CD8-positive, alpha-beta T cell (primary cell): ENCODE measurements at regions of chr1 and their contacts with region 1.

Region 1: GRCh38 chr1:1122078-1122811 is 6.4 kb upstream of the C1orf159 start:
- DNase-seq: peak; percentile 68 to 92 (median 82)
- ATAC-seq: peak; percentile 98
- H3K4me3 ChIP-seq: peak overlapping the region; percentile 43 to 46
- H3K4me3 Mint-ChIP-seq: peak overlapping the region; percentile 37
- H3K27ac ChIP-seq: no peak overlapping the region
- H3K27ac Mint-ChIP-seq: no peak overlapping the region
- H3K4me1 ChIP-seq: peaks cover 12% of the 10 kb centered on the region
- H3K4me1 Mint-ChIP-seq: peaks cover 4% of the 10 kb centered on the region
- H3K27me3 ChIP-seq: peaks cover 0 to 3% of the 10 kb centered on the region in 2 experiments
- H3K27me3 Mint-ChIP-seq: peaks cover 4% of the 10 kb centered on the region
- CTCF ChIP-seq: peak; percentile 81

Region 2: DNA sequence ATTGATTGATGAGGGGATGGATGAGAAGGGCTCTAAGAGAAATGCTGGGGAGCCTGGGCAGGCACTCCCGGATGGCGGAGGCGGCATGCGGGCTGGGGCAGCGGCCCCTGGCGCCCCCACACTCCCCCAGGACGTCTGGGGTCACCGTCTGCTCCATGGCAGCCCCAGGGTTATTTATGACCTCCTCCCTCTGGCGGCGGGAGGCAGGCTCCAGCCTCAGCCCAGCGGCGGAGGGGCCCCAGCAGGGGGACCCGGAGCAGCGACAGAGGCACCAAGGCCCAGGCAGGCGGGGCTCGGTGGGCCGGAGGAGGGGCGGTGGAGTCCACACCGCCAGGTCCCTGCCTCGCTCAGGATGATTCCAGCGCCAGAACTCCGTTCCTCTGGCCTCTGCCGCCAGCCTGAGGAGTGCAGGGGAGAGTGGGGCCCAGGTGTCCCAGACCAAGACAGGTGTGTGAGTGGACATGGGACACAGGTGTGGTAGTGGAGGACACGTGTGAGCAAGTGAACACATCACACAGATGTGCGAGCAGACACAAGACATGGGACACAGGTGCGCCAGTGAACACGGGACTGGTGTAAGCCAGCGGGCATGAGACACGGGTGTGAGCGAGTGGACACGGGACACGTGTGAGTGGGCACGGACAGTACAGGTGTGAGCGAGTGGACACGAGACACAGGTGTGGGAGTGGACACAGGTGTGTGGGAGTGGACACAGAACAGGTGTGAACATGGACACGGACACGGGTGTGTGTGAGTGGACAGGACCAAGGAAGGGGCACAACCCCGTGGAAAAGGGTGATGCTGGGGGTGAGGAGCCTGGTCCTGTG is 201.0 kb before region 1 on chr1:
- CTCF ChIA-PET with region 1: no interaction called
- POLR2A ChIA-PET with region 1: no interaction called
- intact Hi-C with region 1: no loop called
- DNase-seq: peak in 4 of 9 experiments; percentile 24 to 66 (median 55)
- ATAC-seq: peak; percentile 48
- H3K4me3 ChIP-seq: no peak overlapping the region
- H3K4me3 Mint-ChIP-seq: peak overlapping the region; percentile 29
- H3K27ac ChIP-seq: no peak overlapping the region
- H3K27ac Mint-ChIP-seq: no peak overlapping the region
- H3K4me1 ChIP-seq: peaks cover 33% of the 10 kb centered on the region
- H3K4me1 Mint-ChIP-seq: peaks cover 17% of the 10 kb centered on the region
- H3K27me3 ChIP-seq: peaks cover 39 to 42% of the 10 kb centered on the region in 2 experiments
- H3K27me3 Mint-ChIP-seq: peaks cover 40% of the 10 kb centered on the region
- CTCF ChIP-seq: no peak

Region 3: GRCh38 chr1:1033009-1033587 is 89.1 kb before region 1 on chr1:
- CTCF ChIA-PET with region 1: interaction called, 5 read pairs
- POLR2A ChIA-PET with region 1: no interaction called
- intact Hi-C with region 1: loop called (anchors 1 to 2 kb)
- DNase-seq: peak; percentile 72 to 93 (median 85)
- ATAC-seq: peak; percentile 94
- H3K4me3 ChIP-seq: peak overlapping the region; percentile 23 to 24
- H3K4me3 Mint-ChIP-seq: peak overlapping the region; percentile 74
- H3K27ac ChIP-seq: no peak overlapping the region
- H3K27ac Mint-ChIP-seq: no peak overlapping the region
- H3K4me1 ChIP-seq: peaks cover 13% of the 10 kb centered on the region
- H3K4me1 Mint-ChIP-seq: peaks cover 7% of the 10 kb centered on the region
- H3K27me3 ChIP-seq: peaks cover 0 to 27% of the 10 kb centered on the region in 2 experiments
- H3K27me3 Mint-ChIP-seq: peaks cover 20% of the 10 kb centered on the region
- CTCF ChIP-seq: peak; percentile 95

Region 4: DNA sequence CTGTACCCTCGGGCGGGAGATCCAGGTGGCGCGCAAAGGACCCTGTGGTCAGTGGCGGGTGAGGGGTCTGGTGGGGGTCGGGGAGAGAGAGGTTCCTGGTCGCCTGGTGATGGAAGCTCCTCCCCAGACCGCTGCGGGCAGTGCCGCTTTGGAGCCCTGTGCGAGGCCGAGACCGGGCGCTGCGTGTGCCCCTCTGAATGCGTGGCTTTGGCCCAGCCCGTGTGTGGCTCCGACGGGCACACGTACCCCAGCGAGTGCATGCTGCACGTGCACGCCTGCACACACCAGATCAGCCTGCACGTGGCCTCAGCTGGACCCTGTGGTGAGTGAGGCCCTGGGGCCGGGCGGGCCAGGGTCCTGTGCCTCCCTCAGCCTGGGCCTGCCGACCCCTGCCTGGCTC is 78.8 kb before region 1 on chr1:
- CTCF ChIA-PET with region 1: no interaction called
- POLR2A ChIA-PET with region 1: no interaction called
- intact Hi-C with region 1: no loop called
- DNase-seq: no peak
- ATAC-seq: no peak
- H3K4me3 ChIP-seq: no peak overlapping the region
- H3K4me3 Mint-ChIP-seq: no peak overlapping the region
- H3K27ac ChIP-seq: no peak overlapping the region
- H3K27ac Mint-ChIP-seq: no peak overlapping the region
- H3K4me1 ChIP-seq: peaks cover 21% of the 10 kb centered on the region
- H3K4me1 Mint-ChIP-seq: peaks cover 14% of the 10 kb centered on the region
- H3K27me3 ChIP-seq: peaks cover 0 to 4% of the 10 kb centered on the region in 2 experiments
- H3K27me3 Mint-ChIP-seq: peaks cover 4% of the 10 kb centered on the region
- CTCF ChIP-seq: no peak

Region 5: GRCh38 chr1:1055841-1056736 is 66.2 kb before region 1 on chr1:
- CTCF ChIA-PET with region 1: no interaction called
- POLR2A ChIA-PET with region 1: no interaction called
- intact Hi-C with region 1: no loop called
- DNase-seq: no peak
- ATAC-seq: no peak
- H3K4me3 ChIP-seq: no peak overlapping the region
- H3K4me3 Mint-ChIP-seq: no peak overlapping the region
- H3K27ac ChIP-seq: no peak overlapping the region
- H3K27ac Mint-ChIP-seq: no peak overlapping the region
- H3K4me1 ChIP-seq: peaks cover 14% of the 10 kb centered on the region
- H3K4me1 Mint-ChIP-seq: peaks cover 8% of the 10 kb centered on the region
- H3K27me3 ChIP-seq: peaks cover 0 to 26% of the 10 kb centered on the region in 2 experiments
- H3K27me3 Mint-ChIP-seq: peaks cover 15% of the 10 kb centered on the region
- CTCF ChIP-seq: no peak

Region 6: GRCh38 chr1:1173793-1174415 is 51.7 kb after region 1 on chr1 and contains the start of gene TTLL10:
- CTCF ChIA-PET with region 1: interaction called, 10 read pairs
- POLR2A ChIA-PET with region 1: no interaction called
- intact Hi-C with region 1: no loop called
- DNase-seq: peak; percentile 28 to 81 (median 66)
- ATAC-seq: peak; percentile 45
- H3K4me3 ChIP-seq: no peak within 1 kb of the TSS
- H3K4me3 Mint-ChIP-seq: peak within 1 kb of the TSS; percentile 32
- H3K27ac ChIP-seq: no peak within 1 kb of the TSS
- H3K27ac Mint-ChIP-seq: no peak within 1 kb of the TSS
- H3K4me1 ChIP-seq: peaks cover 41% of the 10 kb centered on the region
- H3K4me1 Mint-ChIP-seq: peaks cover 32% of the 10 kb centered on the region
- H3K27me3 ChIP-seq: peaks cover 0 to 14% of the 10 kb centered on the region in 2 experiments
- H3K27me3 Mint-ChIP-seq: peaks cover 5% of the 10 kb centered on the region
- CTCF ChIP-seq: no peak
- total RNA-seq, gene TTLL10: not detected

Region 7: DNA sequence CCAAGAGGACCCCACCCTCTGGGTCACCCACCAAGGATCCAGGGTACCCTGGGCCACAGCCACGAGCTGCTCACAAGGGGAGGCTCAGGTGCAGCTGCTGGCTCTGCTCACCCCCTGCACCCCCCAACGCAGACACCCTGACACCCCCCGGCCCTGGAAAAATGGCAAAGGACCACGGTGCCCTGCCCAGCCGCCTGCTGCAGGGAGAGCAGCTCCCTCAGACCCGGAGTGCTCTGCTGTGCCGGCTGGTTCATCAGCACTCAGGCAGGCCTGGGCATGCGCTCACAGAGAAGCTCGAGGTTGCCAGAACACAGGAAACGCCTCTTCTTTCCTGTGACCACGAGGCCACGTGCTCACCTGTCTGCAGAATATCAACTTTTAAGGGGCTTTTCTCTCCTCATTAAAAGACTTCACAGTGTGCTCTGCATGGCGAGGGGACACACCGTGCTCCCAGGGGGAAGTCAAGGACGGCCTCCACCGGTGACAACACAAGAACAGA is 128.6 kb after region 1 on chr1:
- CTCF ChIA-PET with region 1: interaction called, 20 read pairs
- POLR2A ChIA-PET with region 1: interaction called, 8 read pairs
- intact Hi-C with region 1: loop called in 1 of 2 experiments (anchors 1 kb)
- DNase-seq: peak; percentile 30 to 91 (median 74)
- ATAC-seq: peak; percentile 99
- H3K4me3 ChIP-seq: peak overlapping the region in 1 of 2 experiments; percentile 10
- H3K4me3 Mint-ChIP-seq: peak overlapping the region; percentile 72
- H3K27ac ChIP-seq: peak overlapping the region; percentile 40 to 63
- H3K27ac Mint-ChIP-seq: peak overlapping the region; percentile 93
- H3K4me1 ChIP-seq: peaks cover 25% of the 10 kb centered on the region
- H3K4me1 Mint-ChIP-seq: peaks cover 15% of the 10 kb centered on the region
- H3K27me3 ChIP-seq: peaks cover 0 to 6% of the 10 kb centered on the region in 2 experiments
- H3K27me3 Mint-ChIP-seq: no peaks in the 10 kb centered on the region
- CTCF ChIP-seq: no peak

Region 8: GRCh38 chr1:1273512-1274298 is 151.5 kb after region 1 on chr1 and contains the start of gene UBE2J2:
- CTCF ChIA-PET with region 1: interaction called, 16 read pairs
- POLR2A ChIA-PET with region 1: no interaction called
- intact Hi-C with region 1: no loop called
- DNase-seq: peak; percentile 86 to 96 (median 93)
- ATAC-seq: peak; percentile 95
- H3K4me3 ChIP-seq: peak within 1 kb of the TSS; percentile 69 to 91
- H3K4me3 Mint-ChIP-seq: peak within 1 kb of the TSS; percentile 88
- H3K27ac ChIP-seq: peak within 1 kb of the TSS; percentile 53 to 63
- H3K27ac Mint-ChIP-seq: peak within 1 kb of the TSS; percentile 89
- H3K4me1 ChIP-seq: peaks cover 39% of the 10 kb centered on the region
- H3K4me1 Mint-ChIP-seq: peaks cover 40% of the 10 kb centered on the region
- H3K27me3 ChIP-seq: no peaks in the 10 kb centered on the region
- H3K27me3 Mint-ChIP-seq: no peaks in the 10 kb centered on the region
- CTCF ChIP-seq: no peak
- total RNA-seq, gene UBE2J2: 46.4 to 50.7 TPM

Region 9: DNA sequence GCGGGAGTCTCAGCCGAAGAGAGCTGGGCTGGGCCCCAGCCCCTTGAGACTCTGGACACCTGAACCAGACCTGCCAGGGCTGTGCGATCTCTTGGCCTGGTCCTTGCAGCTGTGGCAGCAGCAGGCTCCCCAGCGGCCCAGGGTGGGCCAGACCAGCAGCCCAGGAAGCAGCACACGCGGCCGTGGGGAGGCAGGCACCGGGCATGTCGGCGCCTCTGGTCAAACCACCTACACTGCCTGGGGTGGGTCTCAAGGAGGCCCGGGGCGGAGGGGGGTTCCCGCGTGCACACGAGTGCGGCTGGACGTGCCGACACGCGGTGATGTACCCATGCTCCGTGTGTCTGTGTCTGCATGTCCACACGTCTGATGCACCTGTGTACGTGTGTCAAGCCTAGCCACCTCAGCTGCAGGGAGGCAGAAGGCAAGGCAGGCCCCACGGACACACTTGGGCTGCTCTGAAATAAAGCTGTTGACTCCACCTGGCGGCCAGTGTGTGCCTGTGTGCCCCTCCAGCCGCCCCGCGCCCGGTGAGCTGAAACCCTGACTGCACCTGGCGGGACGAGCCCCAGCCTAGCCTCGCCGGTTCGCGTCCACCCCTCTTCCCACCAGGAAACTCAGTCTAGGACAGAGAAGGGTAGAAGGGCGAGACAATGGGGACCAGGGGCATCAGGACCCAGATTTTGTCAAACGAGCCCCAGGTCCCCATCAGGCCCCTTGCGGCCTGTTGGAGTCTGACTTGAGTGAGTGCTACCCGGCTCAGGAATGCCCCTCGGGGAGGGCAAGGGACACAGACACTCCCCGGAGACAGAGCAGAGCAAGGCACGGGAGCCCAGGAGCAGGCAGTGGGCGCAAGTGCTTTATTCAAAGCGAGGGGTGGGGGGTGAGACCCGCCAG is 169.6 kb after region 1 on chr1:
- CTCF ChIA-PET with region 1: interaction called, 101 read pairs
- POLR2A ChIA-PET with region 1: interaction called, 7 read pairs
- intact Hi-C with region 1: loop called in 1 of 2 experiments (anchors 2 kb)
- DNase-seq: peak in 8 of 9 experiments; percentile 55 to 82 (median 74)
- ATAC-seq: peak; percentile 87
- H3K4me3 ChIP-seq: no peak overlapping the region
- H3K4me3 Mint-ChIP-seq: no peak overlapping the region
- H3K27ac ChIP-seq: no peak overlapping the region
- H3K27ac Mint-ChIP-seq: no peak overlapping the region
- H3K4me1 ChIP-seq: peaks cover 4% of the 10 kb centered on the region
- H3K4me1 Mint-ChIP-seq: peaks cover 3% of the 10 kb centered on the region
- H3K27me3 ChIP-seq: no peaks in the 10 kb centered on the region
- H3K27me3 Mint-ChIP-seq: no peaks in the 10 kb centered on the region
- CTCF ChIP-seq: peak; percentile 58

Region 10: DNA sequence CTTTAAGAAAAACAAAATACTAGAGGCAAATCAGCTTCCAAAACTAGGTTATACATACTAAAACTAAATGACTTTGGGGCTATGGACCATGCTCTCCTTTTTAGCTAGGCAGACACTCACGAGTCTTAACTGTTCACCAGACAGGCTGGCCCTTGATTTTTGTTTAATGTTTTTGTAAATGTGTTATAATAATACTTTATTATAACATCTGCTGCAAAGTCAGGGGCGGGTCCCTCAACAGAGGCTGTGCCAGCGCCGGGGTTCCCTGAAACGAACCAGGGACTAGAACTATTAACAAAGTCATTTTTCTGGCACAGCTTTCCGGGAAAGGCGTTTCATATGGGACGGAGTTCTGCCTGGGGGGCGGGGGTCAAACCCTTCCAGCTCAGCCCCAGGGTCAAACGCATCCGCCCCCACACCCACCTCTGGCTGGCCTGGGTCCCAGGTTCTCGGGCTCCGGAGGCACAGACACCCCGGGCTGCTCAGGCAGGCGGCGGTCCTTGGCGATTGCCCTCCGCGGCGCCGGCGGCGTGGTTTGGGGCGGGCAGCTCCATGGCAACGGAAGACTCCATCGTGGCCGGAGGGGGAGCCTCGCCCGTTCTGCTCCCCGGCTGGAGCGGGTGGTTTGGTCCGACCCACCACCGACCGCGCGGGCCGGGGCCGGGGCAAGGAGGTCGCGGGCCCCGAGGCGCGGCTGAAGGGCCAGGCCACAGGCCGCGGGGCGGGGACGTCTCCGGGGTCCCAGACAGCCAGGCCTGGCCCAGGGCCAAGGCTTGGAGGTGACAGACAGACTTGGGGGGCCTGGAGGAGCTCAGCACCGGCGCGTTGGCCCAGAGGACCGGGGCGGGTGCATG is 881.3 kb after region 1 on chr1 and contains the start of gene CFAP74:
- CTCF ChIA-PET with region 1: no interaction called
- POLR2A ChIA-PET with region 1: no interaction called
- intact Hi-C with region 1: no loop called
- DNase-seq: peak in 1 of 9 experiments; percentile 36
- ATAC-seq: no peak
- H3K4me3 ChIP-seq: no peak within 1 kb of the TSS
- H3K4me3 Mint-ChIP-seq: no peak within 1 kb of the TSS
- H3K27ac ChIP-seq: no peak within 1 kb of the TSS
- H3K27ac Mint-ChIP-seq: no peak within 1 kb of the TSS
- H3K4me1 ChIP-seq: no peaks in the 10 kb centered on the region
- H3K4me1 Mint-ChIP-seq: peaks cover 4% of the 10 kb centered on the region
- H3K27me3 ChIP-seq: peaks cover 0 to 3% of the 10 kb centered on the region in 2 experiments
- H3K27me3 Mint-ChIP-seq: peaks cover 48% of the 10 kb centered on the region
- CTCF ChIP-seq: no peak
- total RNA-seq, gene CFAP74: not detected